HEK293 (cell line): ENCODE measurements at regions of chrX and their contacts with region 1.

Region 1: DNA sequence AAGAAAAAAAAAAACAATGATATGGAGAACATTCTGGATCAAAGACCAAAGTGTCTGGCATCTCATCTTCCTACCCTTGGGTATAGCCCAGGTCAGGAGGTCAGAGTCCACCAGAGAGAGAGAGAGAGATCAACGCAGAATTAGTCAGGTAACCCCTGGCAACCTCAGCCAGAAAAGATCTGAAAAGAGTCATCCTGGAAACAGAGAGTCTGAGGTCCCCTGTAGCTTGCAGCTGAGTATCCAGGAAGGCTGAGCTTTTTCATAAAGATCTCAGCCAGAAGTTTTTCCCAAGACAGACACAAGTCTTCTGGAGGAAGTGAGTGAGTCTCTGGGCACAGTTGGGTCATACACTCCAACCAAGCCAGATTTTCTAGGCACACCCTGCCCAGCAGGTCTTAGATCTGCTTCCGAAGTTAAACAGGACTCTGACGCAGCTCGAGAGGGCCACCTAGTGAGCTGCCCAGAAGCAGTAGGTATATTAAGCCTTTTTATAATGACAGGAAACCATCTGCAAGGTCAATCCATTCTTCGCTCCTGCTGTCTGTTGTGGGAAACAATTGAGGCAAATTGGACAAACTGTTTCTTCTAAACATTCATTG is 35.7 kb downstream of the ACE2 start:
- H3K4me3 ChIP-seq: no peak overlapping the region
- H3K27ac ChIP-seq: no peak overlapping the region
- H3K4me1 ChIP-seq: no peaks in the 10 kb centered on the region
- CTCF ChIP-seq: peak; percentile 31; the same call in 1 of the 2 replicates

Region 2: GRCh38 chrX:15497865-15498264 is 67.2 kb before region 1 on chrX:
- CTCF ChIA-PET with region 1: interaction called, 13 read pairs
- POLR2A ChIA-PET with region 1: no interaction called
- H3K4me3 ChIP-seq: no peak overlapping the region
- H3K27ac ChIP-seq: no peak overlapping the region
- H3K4me1 ChIP-seq: no peaks in the 10 kb centered on the region
- CTCF ChIP-seq: 0 out of 2 replicates have a peak, but pooled peaks have one; percentile 37

Region 3: DNA sequence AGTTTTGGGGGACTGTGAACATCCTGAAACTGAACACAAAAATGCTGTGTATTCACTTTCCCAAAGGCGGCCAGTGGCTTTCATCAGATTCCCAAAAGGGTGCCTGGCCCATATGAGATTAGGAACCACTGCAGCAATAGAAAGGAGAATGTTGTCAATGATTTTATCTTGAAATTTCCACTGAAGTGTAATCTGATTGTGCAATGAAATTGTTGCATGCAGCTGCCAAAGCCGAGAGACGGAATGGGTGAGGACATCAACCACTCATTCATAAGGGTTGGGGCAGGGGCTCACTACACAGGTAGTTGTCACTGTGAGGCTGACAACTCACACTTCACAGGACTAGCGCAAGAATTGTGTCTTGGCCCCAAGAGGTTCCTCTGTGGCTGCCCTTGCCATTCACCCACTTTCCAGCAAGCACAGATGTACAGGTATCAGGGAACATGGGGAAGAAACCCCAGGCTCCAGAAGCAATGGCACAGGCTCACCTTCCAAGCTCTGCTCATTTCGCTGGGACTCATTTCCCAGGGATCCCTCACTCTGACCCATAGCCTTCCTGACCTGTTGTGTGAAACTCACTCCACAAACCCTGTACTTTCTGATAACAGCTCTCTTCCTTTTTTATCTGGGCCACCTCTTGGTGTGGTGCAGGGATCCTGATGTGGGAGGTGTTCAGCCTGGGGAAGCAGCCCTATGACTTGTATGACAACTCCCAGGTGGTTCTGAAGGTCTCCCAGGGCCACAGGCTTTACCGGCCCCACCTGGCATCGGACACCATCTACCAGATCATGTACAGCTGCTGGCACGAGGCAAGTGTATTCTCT is 15.7 kb before region 1 on chrX:
- CTCF ChIA-PET with region 1: interaction called, 11 read pairs
- POLR2A ChIA-PET with region 1: no interaction called
- H3K4me3 ChIP-seq: no peak overlapping the region
- H3K27ac ChIP-seq: no peak overlapping the region
- H3K4me1 ChIP-seq: no peaks in the 10 kb centered on the region
- CTCF ChIP-seq: no peak

Region 4: DNA sequence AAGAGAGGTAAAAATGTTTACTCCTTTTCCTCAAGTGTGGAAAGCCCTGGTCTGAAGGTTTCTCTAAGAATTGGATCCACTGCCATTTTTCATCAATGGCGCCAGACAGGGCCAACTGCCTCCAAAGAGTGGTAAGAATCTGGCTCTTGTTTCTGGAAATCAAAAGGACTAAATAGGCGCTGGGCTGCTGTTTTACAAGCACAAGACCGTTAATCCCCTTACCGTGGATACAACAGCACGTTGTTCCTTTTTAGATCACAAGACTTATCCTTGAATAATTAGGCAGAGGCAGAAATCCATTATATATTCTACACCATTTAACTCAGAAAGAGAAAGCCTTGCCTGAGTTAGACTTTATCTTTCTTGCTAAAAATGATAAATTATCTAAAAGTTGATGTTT is 88.9 kb after region 1 on chrX:
- CTCF ChIA-PET with region 1: no interaction called
- POLR2A ChIA-PET with region 1: no interaction called
- H3K4me3 ChIP-seq: no peak overlapping the region
- H3K27ac ChIP-seq: no peak overlapping the region
- H3K4me1 ChIP-seq: no peaks in the 10 kb centered on the region
- CTCF ChIP-seq: no peak

Region 5: GRCh38 chrX:15769300-15769954 is 204.3 kb after region 1 on chrX:
- CTCF ChIA-PET with region 1: no interaction called
- POLR2A ChIA-PET with region 1: no interaction called
- H3K4me3 ChIP-seq: no peak overlapping the region
- H3K27ac ChIP-seq: no peak overlapping the region
- H3K4me1 ChIP-seq: no peaks in the 10 kb centered on the region
- CTCF ChIP-seq: no peak